Calu3 (cell line): ENCODE measurements at regions of chr14 and their contacts with region 1.

Region 1: DNA sequence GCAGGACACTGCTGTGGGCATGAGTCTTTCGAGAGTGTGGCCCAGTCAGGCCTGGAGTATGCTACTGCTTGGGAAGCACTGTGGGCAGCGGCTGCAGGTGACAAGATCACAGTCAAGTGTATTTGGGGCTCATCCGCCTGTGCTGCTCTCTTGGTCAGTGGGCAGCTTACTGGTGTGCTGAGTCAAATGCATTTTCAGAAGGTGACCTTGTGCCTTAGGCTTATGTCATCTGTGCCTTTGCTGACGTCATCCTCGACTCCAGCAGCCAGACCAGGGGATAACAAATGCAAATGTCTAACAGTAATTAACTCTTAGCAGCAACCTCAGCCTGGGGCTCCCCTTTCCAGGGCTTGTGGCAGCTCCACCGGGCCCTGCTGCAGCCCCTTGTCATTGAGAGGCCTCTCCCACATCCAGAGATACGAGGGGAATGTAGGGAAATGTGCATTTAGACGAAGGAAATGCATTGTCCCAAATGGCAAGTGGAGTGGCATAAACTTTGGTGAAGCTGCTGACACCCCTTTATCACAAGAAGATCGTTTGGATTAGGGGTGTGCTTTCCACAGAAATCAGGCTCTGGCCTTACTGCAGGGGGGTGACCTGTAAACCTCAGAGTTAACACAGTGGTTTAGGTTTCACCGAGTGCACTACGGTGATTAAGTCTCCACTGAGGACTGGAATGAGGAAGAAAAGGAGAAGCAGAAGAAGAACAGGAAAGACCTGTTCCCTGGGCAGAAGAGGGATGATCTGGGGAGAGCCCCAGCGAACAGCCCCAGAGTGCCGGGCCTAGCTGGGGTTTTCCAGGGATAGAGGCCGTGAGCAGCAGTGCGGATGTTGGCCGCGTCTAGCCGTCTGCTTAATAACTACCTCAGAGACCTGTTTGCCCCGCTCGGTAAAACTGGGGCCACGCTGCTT is 39.7 kb downstream of the PSMA6 start:
- DNase-seq: peak; percentile 90
- H3K4me3 Mint-ChIP-seq: peak overlapping the region; percentile 54
- H3K27ac Mint-ChIP-seq: peak overlapping the region; percentile 100
- H3K4me1 Mint-ChIP-seq: peaks cover 43% of the 10 kb centered on the region
- H3K27me3 Mint-ChIP-seq: peaks cover 12% of the 10 kb centered on the region
- CTCF ChIP-seq: no peak

Region 2: DNA sequence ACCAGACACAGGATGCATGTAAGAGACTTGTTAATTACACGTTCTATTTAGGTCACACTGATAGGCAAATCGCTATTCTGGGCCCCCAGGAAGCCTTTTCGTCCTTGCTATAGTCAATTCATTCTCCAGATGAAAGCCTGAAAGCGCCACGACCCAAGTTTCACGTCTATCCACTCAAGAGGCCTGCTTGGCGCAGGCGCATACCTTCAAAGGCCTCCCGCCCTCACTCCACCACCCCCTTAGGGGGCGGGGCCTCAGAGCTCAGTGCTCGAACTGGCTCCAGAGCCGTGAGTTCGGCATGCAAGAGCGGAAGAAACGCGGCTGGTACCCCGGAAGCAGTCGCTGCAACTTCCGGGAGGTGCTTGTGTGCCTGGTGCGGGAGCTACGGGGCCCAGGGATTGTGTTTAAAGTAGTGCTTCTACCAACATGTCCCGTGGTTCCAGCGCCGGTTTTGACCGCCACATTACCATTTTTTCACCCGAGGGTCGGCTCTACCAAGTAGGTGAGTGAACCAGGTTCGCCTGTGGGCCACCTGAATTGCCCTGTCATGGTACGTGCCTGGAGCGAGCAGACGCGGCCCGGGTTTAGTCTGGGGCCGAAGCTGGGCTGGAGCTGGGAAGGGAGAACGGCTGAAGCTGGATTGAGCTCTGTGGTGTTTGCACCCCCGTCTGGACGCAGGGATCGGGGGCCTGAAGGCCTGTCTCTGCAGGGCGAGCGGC is 39.7 kb before region 1 on chr14 and contains the start of gene PSMA6:
- CTCF ChIA-PET with region 1: interaction called, 6 read pairs
- intact Hi-C with region 1: loop called (anchors 5 kb)
- DNase-seq: peak; percentile 98
- H3K4me3 Mint-ChIP-seq: peak within 1 kb of the TSS; percentile 87
- H3K27ac Mint-ChIP-seq: peak within 1 kb of the TSS; percentile 78
- H3K4me1 Mint-ChIP-seq: peaks cover 24% of the 10 kb centered on the region
- H3K27me3 Mint-ChIP-seq: no peaks in the 10 kb centered on the region
- CTCF ChIP-seq: no peak
- total RNA-seq, gene PSMA6: 297 and 341 TPM in 2 replicates

Region 3: DNA sequence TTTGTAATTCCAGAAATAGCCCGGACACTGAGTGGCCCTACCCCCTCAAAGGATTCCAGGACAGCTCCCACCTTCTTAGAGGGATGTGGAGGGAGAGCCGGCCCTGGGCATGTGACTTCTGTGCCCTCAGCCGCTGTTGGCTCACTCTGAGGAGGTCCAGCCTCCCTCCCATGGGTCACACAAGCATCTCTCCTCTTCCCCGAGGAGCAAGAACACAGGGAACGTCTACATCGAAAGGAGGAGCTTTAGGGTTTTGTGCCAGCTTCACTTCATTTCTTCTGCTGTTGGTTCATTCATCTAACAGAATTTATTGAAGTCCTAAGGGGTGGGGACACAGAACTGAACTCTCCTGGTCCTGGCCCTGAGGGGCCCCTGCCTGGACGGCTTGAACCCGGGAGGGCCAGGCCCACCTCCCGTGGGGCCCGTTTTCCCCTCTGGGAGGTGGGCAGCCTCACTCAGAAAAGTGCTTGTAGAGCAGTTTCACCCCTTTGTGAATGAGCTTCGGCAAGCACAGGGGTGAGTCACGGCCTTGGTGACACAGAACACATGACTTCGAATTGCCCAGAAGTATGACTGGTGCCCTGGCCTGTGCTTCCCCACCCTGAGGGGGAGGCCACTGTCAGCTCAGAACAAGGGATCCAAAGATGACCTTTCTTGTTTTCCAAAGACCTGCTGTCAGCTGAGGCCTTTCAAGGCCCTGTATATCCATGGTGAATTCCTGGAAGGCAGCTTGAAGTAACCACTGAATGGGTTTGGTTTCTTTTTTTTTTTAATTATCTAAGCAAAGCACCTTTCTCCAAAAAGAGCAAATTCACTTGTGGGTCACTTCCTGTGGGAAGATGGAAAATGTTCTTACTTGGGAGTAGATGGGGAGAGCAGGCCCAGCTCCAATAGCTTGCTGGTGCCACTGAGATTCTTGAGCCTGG is 33.5 kb after region 1 on chr14:
- CTCF ChIA-PET with region 1: interaction called, 6 read pairs
- intact Hi-C with region 1: loop called (anchors 5 kb)
- DNase-seq: peak; percentile 73
- H3K4me3 Mint-ChIP-seq: no peak overlapping the region
- H3K27ac Mint-ChIP-seq: peak overlapping the region; percentile 60
- H3K4me1 Mint-ChIP-seq: peaks cover 41% of the 10 kb centered on the region
- H3K27me3 Mint-ChIP-seq: no peaks in the 10 kb centered on the region
- CTCF ChIP-seq: no peak

Region 4: GRCh38 chr14:35403603-35404448 is 72.0 kb after region 1 on chr14:
- CTCF ChIA-PET with region 1: no interaction called
- intact Hi-C with region 1: loop called (anchors 2 kb)
- DNase-seq: peak; percentile 97
- H3K4me3 Mint-ChIP-seq: peak overlapping the region; percentile 93
- H3K27ac Mint-ChIP-seq: peak overlapping the region; percentile 96
- H3K4me1 Mint-ChIP-seq: peaks cover 32% of the 10 kb centered on the region
- H3K27me3 Mint-ChIP-seq: no peaks in the 10 kb centered on the region
- CTCF ChIP-seq: no peak